Right ventricle myocardium inferior (tissue), 1 donor: ENCODE measurements at regions of chrX and their contacts with region 1.

Region 1: DNA sequence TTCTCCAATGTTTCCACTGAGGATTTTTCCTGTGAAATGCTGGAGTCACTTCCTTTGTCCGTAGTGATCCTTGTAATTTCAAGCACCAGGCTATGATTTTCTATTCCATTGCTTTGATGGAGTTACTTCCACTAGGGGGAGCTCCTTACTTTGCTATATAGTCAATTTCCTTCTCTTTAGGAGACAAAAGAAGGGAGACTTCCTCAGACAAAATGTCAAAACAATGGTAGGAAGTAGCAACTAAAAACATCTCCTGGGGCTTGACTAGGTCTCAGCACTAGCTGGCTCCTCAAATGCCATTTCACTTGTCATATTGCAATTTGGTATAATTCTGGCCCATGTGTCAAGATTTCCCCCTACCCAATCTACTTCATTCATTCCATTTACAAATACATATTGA is 24.1 kb downstream of the ZCCHC12 start:
- DNase-seq: no peak
- ATAC-seq: no peak

Region 2: GRCh38 chrX:118974088-118974907 is 126.6 kb after region 1 on chrX and contains the start of gene LONRF3:
- intact Hi-C with region 1: loop called (anchors 10 kb)
- DNase-seq: peak; percentile 91
- ATAC-seq: peak; percentile 72
- total RNA-seq, gene LONRF3: 3.0 TPM

Region 3: DNA sequence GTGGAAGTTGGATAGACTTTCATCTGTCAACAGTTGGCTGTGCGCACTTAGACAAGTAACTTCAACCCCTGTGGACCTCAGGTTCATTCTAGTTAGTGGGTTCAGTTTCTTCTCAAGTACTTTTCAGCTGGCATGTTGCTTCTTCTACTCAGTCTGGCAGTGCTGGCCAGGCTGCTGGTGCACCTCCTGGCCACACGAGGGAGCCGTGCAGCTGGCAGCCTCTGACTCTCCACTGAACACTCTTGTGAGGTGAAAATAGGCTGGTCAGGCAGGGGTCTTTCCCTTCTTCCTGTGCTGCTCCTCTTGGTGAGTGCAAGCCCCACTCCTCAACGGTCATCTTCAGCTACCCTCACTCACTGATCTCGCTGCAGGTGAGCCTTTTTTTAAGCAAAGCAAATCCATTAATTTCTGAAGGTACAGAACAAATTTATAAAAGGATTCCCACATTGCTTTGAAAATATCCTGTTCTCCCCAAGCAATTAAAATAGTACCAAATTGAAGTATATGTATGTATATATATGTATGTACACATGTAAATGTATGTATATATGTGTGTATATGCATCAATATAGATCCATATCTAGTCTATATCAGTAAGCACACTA is 157.3 kb after region 1 on chrX:
- intact Hi-C with region 1: loop called (anchors 2 kb)
- DNase-seq: no peak
- ATAC-seq: peak; percentile 72

Region 4: DNA sequence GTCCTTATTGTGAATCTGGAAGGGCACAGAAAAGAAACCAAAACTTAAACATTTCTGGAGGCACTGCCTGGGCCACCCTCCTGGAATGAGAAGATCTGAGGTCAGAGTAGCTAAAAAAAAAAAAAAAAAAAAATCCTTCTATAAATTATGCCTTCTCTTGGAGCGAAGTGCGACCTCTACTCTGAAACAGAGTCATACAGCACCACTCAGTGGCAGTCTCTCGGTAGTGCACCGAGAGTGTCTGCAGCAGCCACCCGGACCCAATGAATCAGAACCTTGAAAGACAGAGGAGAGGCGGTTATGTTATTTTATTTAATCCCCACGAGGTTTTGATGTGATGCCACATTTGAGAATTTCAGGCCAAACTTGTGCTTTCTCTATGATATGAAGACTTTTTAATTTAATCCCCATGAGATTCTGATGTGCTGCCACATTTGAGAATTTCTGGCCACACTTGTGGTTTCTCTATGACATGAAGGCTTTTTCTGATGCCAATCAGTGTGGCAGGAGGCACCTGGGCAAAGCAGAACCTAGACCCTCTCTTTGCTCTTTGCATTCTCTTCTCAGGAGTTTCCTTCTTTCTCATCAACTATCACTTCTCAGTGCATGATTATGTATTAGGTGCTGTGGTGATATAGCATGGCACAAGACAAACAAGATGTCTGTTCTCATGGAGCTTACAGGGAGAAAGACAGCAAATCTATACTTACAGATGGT is 219.5 kb after region 1 on chrX:
- intact Hi-C with region 1: loop called (anchors 2 kb)
- DNase-seq: no peak
- ATAC-seq: peak; percentile 72